Right ventricle myocardium inferior (tissue), 1 donor: ENCODE measurements at regions of chr3 and their contacts with region 1.

Region 1: GRCh38 chr3:80688814-80689213 is 921.0 kb upstream of the ROBO1 start:
- DNase-seq: no peak
- ATAC-seq: no peak

Region 2: GRCh38 chr3:79521238-79521848 is 1167.5 kb before region 1 on chr3:
- intact Hi-C with region 1: loop called (anchors 2 kb)
- DNase-seq: no peak
- ATAC-seq: no peak

Region 3: GRCh38 chr3:81161851-81162250 is 473.0 kb after region 1 on chr3:
- intact Hi-C with region 1: no loop called
- DNase-seq: no peak
- ATAC-seq: no peak